Psoas muscle (tissue), 8 donors: ENCODE measurements at regions of chr9 and their contacts with region 1.

Region 1: GRCh38 chr9:27194401-27195091 is 85.5 kb downstream of the TEK start:
- DNase-seq: no peak
- ATAC-seq: peak in 1 of 4 donors; percentile 27
- H3K4me3 ChIP-seq: no peak overlapping the region
- H3K27ac ChIP-seq: no peak overlapping the region
- H3K4me1 ChIP-seq: no peaks in the 10 kb centered on the region
- H3K27me3 ChIP-seq: no peaks in the 10 kb centered on the region
- CTCF ChIP-seq: no peak

Region 2: GRCh38 chr9:27276193-27277030 is 81.9 kb after region 1 on chr9:
- intact Hi-C with region 1: loop called in 1 of 2 experiments (anchors 10 kb)
- DNase-seq: no peak
- ATAC-seq: peak in 3 of 4 donors; percentile 53 to 85 (median 60)
- H3K4me3 ChIP-seq: peak overlapping the region; percentile 44
- H3K27ac ChIP-seq: no peak overlapping the region
- H3K4me1 ChIP-seq: peaks cover 4% of the 10 kb centered on the region
- H3K27me3 ChIP-seq: no peaks in the 10 kb centered on the region
- CTCF ChIP-seq: peak; percentile 84